ENCODE measurements at regions of chr5 and their contacts with region 1.

Region 1: GRCh38 chr5:103450333-103451061 is 112.1 kb downstream of the NUDT12 start:
- ATAC-seq: peak in 4 of 8 experiments; percentile 28 to 99 (median 94)
- H3K4me3 ChIP-seq: no peak overlapping the region
- H3K27ac ChIP-seq: no peak overlapping the region
- H3K4me1 ChIP-seq: peaks cover 3 to 11% of the 10 kb centered on the region in 2 donors

Region 2: GRCh38 chr5:103119765-103120606 is 330.5 kb before region 1 on chr5 and contains the starts of genes GIN1 and PPIP5K2:
- in situ Hi-C with region 1: no loop called
- ATAC-seq: peak; percentile 91 to 96 (median 94)
- H3K4me3 ChIP-seq: peak within 1 kb of the TSS; percentile 52 to 83 (median 74)
- H3K27ac ChIP-seq: peak within 1 kb of the TSS; percentile 92 to 94
- H3K4me1 ChIP-seq: peaks cover 0 to 24% of the 10 kb centered on the region in 2 donors
- total RNA-seq, gene GIN1: 7.3 to 12.7 (median 10.8) TPM
- total RNA-seq, gene PPIP5K2: 36.2 to 54.5 (median 50.6) TPM

Region 3: DNA sequence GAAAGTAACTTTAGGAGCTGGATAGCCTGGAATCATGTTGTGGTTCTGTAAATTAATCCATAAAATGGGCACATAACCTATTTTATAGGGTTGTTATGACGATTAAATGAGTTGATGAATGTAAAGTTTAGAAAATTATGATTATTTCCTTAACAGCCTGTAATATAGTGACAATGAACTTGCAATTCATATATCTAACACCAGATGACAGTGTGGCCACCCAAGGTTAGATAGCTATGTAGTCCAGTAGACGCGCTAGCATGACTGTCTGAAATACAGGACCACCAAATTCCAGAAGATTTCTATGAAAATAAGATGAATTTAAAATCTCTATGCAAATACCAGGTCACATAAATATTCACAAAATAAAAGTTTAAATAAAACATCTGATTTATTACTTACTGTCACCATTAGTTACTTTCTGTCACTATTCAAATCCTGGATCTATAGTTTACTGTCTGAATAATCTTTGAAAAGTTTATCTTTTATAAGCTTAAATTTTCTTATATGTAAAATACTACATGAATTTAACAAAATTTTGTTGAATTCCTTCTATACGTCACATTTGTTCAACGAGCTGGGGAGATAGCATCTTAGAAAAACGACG is 218.0 kb before region 1 on chr5:
- in situ Hi-C with region 1: loop called in 1 of 9 experiments (anchors 25 kb)
- ATAC-seq: peak in 3 of 8 experiments; percentile 57 to 83 (median 61)
- H3K4me3 ChIP-seq: no peak overlapping the region
- H3K27ac ChIP-seq: no peak overlapping the region
- H3K4me1 ChIP-seq: no peaks in the 10 kb centered on the region

Region 4: GRCh38 chr5:103258368-103258956 is 192.0 kb before region 1 on chr5 and contains the start of gene MACIR:
- in situ Hi-C with region 1: loop called in 2 of 9 experiments (anchors 25 kb)
- ATAC-seq: peak; percentile 86 to 91 (median 88)
- H3K4me3 ChIP-seq: peak within 1 kb of the TSS; percentile 73 to 86 (median 82)
- H3K27ac ChIP-seq: peak within 1 kb of the TSS; percentile 76
- H3K4me1 ChIP-seq: peaks cover 3 to 17% of the 10 kb centered on the region in 2 donors
- total RNA-seq, gene MACIR: 13.0 to 51.5 (median 17.0) TPM

Region 5: DNA sequence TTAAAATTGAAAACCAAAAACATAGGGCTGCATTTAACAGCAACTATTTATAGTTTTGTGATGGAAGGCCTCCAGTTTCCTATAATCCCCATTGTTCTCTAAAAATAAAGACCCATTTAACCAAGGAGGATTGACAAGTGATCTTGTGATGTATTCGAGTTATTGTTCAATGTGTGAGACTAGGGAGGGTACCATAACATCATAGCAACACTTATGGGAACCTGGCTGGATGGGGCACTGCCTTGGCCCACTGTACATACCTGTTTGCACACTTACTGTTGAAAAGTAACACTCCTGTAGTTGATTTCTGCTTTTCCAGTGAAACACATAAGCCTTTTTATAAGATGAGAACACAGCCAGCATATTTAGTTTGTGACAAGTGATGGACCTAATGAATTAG is 159.7 kb before region 1 on chr5:
- in situ Hi-C with region 1: loop called in 1 of 9 experiments (anchors 25 kb)
- ATAC-seq: no peak
- H3K4me3 ChIP-seq: no peak overlapping the region
- H3K27ac ChIP-seq: no peak overlapping the region
- H3K4me1 ChIP-seq: peaks cover 7 to 11% of the 10 kb centered on the region in 2 donors

Measured in motor neuron (in vitro differentiated cells).